Activated CD8-positive, alpha-beta T cell treated with anti-CD3 and anti-CD28 coated beads for 36 hours (primary cell): ENCODE measurements at regions of chr14 and their contacts with region 1.

Region 1: DNA sequence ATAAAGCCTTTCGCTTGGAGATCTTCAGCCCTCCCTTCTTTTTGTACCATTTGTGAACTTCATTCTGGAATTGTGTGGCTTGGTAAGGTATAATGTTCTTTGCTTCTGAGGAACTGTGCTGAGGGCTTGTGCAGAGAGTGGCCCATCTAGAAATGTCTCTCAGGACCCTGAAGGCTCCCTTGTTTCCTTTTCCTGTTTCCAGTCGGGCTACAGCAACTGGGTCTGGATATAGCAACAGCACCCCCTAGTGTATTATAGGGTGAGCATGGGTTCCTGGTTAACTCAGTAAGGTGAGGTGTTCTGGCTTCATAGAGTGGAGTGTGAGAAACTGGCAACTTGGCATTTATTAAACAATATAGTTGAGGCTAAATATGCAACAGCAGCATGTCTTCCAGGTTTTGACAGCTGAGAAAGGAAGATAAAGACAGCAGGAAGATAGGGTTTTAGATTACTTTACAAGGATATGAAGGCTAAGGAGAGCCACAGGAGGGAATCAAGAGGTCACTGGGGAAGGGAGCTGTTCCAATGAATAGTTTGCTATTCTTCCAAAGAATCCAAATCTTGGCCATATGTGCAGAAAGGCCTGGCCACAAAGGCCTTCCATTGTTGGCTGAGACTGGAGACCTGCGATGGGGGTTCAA is 49.1 kb upstream of the RNU6-8 start:
- DNase-seq: peak; percentile 65
- ATAC-seq: peak; percentile 95
- H3K4me3 Mint-ChIP-seq: no peak overlapping the region
- H3K27ac Mint-ChIP-seq: no peak overlapping the region
- H3K4me1 Mint-ChIP-seq: no peaks in the 10 kb centered on the region
- H3K27me3 Mint-ChIP-seq: no peaks in the 10 kb centered on the region
- CTCF ChIP-seq: peak; percentile 92

Region 2: DNA sequence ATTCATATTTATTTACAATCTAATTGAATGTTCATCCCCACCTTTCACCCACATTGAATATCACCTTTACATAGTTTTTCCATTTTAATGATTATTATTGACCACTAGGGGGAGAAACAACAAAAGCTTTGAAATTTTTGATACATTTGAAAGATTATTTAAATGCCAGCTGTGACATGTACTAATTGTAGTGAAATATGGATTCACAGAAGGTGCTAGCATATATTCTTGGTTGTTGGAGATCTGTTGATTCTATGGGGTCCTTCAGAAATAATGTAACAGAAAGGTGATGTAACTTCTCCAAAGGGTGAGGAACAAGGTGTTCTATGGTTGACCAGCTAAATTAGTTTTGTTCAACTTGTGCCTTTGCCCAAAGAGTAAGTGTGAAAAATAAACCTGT is 741.9 kb before region 1 on chr14:
- CTCF ChIA-PET with region 1: interaction called, 20 read pairs
- POLR2A ChIA-PET with region 1: no interaction called
- intact Hi-C with region 1: loop called (anchors 5 kb)
- DNase-seq: no peak
- ATAC-seq: no peak
- H3K4me3 Mint-ChIP-seq: no peak overlapping the region
- H3K27ac Mint-ChIP-seq: no peak overlapping the region
- H3K4me1 Mint-ChIP-seq: no peaks in the 10 kb centered on the region
- H3K27me3 Mint-ChIP-seq: peaks cover 3% of the 10 kb centered on the region
- CTCF ChIP-seq: peak; percentile 71

Region 3: GRCh38 chr14:32047791-32048190 is 204.4 kb before region 1 on chr14:
- CTCF ChIA-PET with region 1: interaction called, 20 read pairs
- POLR2A ChIA-PET with region 1: no interaction called
- intact Hi-C with region 1: no loop called
- DNase-seq: no peak
- ATAC-seq: no peak
- H3K4me3 Mint-ChIP-seq: no peak overlapping the region
- H3K27ac Mint-ChIP-seq: no peak overlapping the region
- H3K4me1 Mint-ChIP-seq: no peaks in the 10 kb centered on the region
- H3K27me3 Mint-ChIP-seq: peaks cover 2% of the 10 kb centered on the region
- CTCF ChIP-seq: no peak

Region 4: DNA sequence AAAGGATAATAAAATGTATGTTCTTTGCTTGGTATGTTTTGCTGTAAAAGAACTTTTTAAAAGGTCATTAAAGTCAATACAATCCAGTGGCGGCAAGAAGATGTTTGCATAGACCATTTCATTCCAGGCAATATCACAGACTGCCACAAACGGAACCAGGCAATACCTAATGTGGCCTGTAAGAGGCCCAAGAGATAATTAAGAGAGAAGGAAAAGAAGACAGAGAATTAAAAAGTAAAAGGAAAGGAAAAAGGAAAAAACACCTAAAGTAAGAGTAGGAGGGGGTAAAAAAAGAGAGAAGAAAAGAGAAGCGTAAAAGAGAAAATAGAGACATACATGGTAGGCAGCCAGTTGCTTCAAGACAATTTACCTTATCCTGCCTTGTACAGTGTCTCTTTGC is 181.9 kb before region 1 on chr14:
- CTCF ChIA-PET with region 1: interaction called, 76 read pairs
- POLR2A ChIA-PET with region 1: interaction called, 3 read pairs
- intact Hi-C with region 1: loop called (anchors 1 kb)
- DNase-seq: no peak
- ATAC-seq: no peak
- H3K4me3 Mint-ChIP-seq: no peak overlapping the region
- H3K27ac Mint-ChIP-seq: no peak overlapping the region
- H3K4me1 Mint-ChIP-seq: peaks cover 3% of the 10 kb centered on the region
- H3K27me3 Mint-ChIP-seq: peaks cover 6% of the 10 kb centered on the region
- CTCF ChIP-seq: no peak

Region 5: GRCh38 chr14:32202998-32203882 is 48.9 kb before region 1 on chr14 and contains the start of gene RNU6-8:
- CTCF ChIA-PET with region 1: interaction called, 9 read pairs
- POLR2A ChIA-PET with region 1: no interaction called
- intact Hi-C with region 1: loop called (anchors 5 kb)
- DNase-seq: peak; percentile 89
- ATAC-seq: peak; percentile 83
- H3K4me3 Mint-ChIP-seq: peak within 1 kb of the TSS; percentile 78
- H3K27ac Mint-ChIP-seq: peak within 1 kb of the TSS; percentile 98
- H3K4me1 Mint-ChIP-seq: peaks cover 40% of the 10 kb centered on the region
- H3K27me3 Mint-ChIP-seq: no peaks in the 10 kb centered on the region
- CTCF ChIP-seq: no peak
- total RNA-seq, gene RNU6-8: not detected

Region 6: GRCh38 chr14:32352631-32353030 is 100.5 kb after region 1 on chr14:
- CTCF ChIA-PET with region 1: no interaction called
- POLR2A ChIA-PET with region 1: no interaction called
- intact Hi-C with region 1: no loop called
- DNase-seq: no peak
- ATAC-seq: no peak
- H3K4me3 Mint-ChIP-seq: no peak overlapping the region
- H3K27ac Mint-ChIP-seq: no peak overlapping the region
- H3K4me1 Mint-ChIP-seq: no peaks in the 10 kb centered on the region
- H3K27me3 Mint-ChIP-seq: no peaks in the 10 kb centered on the region
- CTCF ChIP-seq: no peak